Activated CD8-positive, alpha-beta T cell treated with anti-CD3 and anti-CD28 coated beads, Interleukin-2, amount 10 ng/mL, durations not matched to agents 7 days and 5 days (primary cell): ENCODE measurements at regions of chr10 and their contacts with region 1.

Region 1: GRCh38 chr10:84360637-84361365 is 32.4 kb downstream of the CCSER2 start:
- DNase-seq: no peak
- ATAC-seq: no peak
- H3K4me3 Mint-ChIP-seq: peak overlapping the region; percentile 13
- H3K27ac Mint-ChIP-seq: no peak overlapping the region
- H3K4me1 Mint-ChIP-seq: peaks cover 59% of the 10 kb centered on the region
- H3K27me3 Mint-ChIP-seq: no peaks in the 10 kb centered on the region

Region 2: DNA sequence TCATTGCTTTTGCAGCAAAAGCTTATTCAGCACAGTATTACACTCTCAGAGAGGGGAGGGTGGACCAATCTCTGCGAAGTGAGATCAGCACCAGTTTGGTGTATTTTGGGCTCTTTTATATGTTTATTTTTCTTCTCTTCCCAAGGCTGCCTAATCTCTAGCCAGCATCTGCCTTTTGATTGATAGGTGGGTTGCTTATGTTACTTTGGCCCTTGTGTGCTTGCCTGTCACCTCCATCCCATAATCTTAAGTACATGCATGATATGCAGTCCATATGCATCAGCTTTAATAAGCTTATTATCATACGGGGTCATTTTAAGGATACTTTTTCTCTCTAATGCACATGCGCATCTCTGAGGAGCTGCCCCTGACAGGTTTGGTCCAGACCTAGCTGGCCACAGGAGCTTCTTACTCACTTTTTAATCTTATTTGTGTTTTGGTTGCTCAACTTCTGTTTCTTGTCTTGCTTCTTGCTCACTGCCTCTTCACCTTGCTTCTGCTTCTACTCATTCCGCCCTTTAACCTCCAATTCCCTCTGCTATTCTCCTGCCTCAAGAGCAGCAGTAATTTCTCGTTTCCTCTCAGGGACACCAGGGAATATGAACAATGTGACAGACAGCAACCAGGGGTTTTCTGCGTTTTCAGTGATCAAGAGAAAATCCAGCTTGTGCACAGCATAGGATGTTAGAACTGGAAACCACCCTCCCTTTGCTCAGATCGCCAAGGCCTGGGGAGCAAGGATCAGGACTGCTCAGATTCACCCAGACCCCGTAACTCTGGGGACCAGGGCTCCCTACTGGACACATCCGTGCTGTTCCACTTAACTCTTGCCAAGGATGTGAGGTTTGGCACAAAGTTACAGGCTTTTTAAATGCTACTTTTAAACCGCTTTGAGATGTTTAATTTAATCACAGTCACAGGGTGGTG is 106.0 kb before region 1 on chr10:
- CTCF ChIA-PET with region 1: no interaction called
- POLR2A ChIA-PET with region 1: no interaction called
- DNase-seq: no peak
- ATAC-seq: no peak
- H3K4me3 Mint-ChIP-seq: no peak overlapping the region
- H3K27ac Mint-ChIP-seq: no peak overlapping the region
- H3K4me1 Mint-ChIP-seq: peaks cover 3% of the 10 kb centered on the region
- H3K27me3 Mint-ChIP-seq: peaks cover 7% of the 10 kb centered on the region

Region 3: DNA sequence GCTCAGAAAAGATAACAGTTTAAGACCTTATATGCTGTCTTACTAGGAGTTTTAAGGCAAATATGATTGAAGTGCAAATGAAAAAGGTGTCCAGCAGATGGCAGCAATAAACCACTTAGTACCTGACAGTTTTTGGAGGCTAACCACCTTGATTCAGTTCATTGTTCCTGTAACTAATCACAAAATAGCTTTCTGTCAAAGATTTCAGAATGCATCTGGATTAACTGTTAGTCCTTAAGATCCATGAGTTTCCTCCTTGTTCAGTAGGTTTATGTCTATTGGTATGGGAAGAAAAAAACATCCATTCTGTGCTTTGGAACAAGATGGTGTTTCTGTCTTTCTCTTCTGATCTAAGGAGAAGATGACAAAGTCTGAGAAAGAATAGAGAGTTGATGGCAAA is 14.2 kb after region 1 on chr10:
- CTCF ChIA-PET with region 1: interaction called, 17 read pairs
- POLR2A ChIA-PET with region 1: no interaction called
- DNase-seq: peak; percentile 65
- ATAC-seq: no peak
- H3K4me3 Mint-ChIP-seq: no peak overlapping the region
- H3K27ac Mint-ChIP-seq: no peak overlapping the region
- H3K4me1 Mint-ChIP-seq: peaks cover 22% of the 10 kb centered on the region
- H3K27me3 Mint-ChIP-seq: no peaks in the 10 kb centered on the region

Region 4: GRCh38 chr10:84415539-84416244 is 54.9 kb after region 1 on chr10:
- CTCF ChIA-PET with region 1: no interaction called
- POLR2A ChIA-PET with region 1: no interaction called
- DNase-seq: no peak
- ATAC-seq: no peak
- H3K4me3 Mint-ChIP-seq: no peak overlapping the region
- H3K27ac Mint-ChIP-seq: no peak overlapping the region
- H3K4me1 Mint-ChIP-seq: peaks cover 12% of the 10 kb centered on the region
- H3K27me3 Mint-ChIP-seq: no peaks in the 10 kb centered on the region